ENCODE measurements at regions of chr10 and their contacts with region 1.

Region 1: DNA sequence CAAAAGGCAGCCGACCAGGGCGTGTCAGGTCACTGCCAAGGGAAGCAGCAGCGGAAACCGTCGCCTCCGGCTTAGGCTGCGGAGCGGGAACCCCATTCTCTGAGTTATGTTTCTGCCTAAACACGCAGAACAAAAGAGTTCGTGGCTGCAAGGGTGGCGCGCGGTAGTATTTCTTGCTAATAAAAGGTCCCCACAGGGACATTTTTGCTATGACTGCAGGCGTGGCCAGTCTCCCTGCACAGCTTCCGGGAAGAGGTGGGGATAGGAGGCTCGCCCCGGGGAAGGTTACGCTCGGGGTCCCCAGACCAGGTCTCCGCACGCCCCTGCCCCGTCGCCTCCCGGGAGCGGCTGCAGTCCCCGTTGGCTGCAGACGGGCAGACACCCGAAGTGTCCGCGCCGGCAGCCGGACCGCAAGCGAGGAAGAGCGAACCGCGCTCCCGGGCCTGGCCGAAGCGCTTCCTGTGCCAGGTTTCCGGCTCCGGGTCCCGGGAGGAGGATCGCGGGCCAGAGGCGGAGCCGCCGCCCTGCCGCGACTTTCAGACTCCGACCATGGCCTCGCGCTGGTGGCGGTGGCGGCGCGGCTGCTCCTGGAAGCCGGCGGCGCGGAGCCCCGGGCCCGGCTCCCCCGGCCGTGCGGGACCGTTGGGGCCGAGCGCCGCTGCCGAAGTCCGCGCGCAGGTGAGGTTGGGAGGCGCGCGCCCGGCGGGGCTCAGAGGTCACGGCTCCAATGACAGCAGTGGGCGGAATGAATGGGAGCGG is at the start of gene PDSS1:
- DNase-seq: peak; percentile 91
- total RNA-seq, gene PDSS1: 6.4 TPM

Region 2: DNA sequence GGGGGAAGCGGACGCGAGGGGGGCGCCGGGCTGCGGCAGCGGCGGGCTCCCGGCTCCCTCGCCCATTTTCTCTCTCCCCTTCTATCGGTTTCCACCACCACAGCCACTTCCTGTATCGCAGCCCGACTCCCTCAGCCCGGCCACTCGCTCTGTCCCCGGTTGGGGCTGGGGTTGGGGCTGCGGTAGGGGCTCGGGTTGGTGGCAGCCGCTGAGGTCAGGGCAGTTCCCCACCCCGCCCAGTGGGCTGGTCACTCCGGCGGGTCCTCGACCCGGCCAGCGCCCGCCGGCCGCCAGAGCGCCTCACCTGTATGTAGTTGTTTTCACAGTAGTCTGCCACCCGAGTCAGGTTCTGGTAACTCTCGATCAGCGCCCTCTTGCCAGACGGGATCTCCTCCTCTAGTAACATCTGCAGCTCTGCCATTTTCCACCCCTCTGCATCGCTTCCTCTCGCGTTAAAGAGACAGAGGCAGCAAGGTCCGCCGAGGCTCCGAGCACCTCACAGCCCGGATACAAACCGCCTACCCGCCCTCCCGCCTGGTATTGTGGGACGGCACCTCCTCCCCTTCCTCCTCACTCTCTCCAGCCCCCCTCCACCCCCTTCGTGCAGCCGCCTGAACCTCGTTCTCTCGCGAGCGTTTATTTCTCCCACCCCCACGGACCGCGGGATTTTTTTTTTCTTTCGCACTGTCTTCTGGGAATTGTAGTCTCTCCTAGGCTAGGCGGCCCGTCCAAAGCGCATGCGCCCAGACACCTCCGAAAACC is 163.3 kb after region 1 on chr10 and contains the start of gene ABI1:
- intact Hi-C with region 1: loop called (anchors 1 kb)
- DNase-seq: peak; percentile 99
- total RNA-seq, gene ABI1: 33.8 TPM

Measured in cardiac septum (tissue), 1 donor.